AG04450 (cell line): ENCODE measurements at regions of chr6 and their contacts with region 1.

Region 1: DNA sequence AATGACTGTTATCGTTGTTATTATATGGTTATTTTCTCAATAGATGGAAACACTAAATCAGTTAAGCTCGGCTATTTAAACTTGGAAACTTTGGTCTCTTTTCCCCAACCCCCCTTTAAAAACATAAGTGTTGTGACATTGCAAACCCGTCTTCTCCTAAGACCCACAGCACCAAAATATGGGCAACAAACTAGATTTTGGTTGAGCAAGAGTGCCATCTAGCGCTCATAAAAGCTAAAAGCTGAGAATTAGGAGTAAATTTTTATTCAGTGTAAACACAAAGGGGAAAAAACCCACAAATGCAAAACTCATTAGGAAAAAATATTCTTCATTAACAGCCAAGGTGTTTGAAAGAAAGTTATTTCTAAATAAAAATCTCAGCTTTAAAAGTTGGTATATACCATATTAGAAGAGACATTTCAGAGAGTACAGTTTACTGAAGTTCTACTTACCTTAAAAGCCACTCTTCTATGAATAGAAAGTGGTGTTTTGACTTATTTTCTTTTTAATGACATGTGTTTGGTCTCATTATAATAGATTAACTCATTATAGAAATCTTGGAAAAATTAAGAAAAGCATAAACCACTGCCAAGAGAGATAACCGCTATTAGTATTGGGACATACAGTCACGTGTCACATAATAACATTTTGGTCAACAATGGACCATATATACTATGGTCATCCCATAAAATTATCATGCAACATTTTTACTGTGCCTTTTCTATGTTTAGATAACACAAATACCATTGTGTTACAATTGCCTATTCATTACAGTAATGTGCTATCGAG is 21.1 kb downstream of the SESN1 start:
- DNase-seq: peak; percentile 46
- H3K4me3 ChIP-seq: no peak overlapping the region
- H3K27ac ChIP-seq: no peak overlapping the region
- H3K27me3 ChIP-seq: no peaks in the 10 kb centered on the region
- CTCF ChIP-seq: peak; percentile 63

Region 2: DNA sequence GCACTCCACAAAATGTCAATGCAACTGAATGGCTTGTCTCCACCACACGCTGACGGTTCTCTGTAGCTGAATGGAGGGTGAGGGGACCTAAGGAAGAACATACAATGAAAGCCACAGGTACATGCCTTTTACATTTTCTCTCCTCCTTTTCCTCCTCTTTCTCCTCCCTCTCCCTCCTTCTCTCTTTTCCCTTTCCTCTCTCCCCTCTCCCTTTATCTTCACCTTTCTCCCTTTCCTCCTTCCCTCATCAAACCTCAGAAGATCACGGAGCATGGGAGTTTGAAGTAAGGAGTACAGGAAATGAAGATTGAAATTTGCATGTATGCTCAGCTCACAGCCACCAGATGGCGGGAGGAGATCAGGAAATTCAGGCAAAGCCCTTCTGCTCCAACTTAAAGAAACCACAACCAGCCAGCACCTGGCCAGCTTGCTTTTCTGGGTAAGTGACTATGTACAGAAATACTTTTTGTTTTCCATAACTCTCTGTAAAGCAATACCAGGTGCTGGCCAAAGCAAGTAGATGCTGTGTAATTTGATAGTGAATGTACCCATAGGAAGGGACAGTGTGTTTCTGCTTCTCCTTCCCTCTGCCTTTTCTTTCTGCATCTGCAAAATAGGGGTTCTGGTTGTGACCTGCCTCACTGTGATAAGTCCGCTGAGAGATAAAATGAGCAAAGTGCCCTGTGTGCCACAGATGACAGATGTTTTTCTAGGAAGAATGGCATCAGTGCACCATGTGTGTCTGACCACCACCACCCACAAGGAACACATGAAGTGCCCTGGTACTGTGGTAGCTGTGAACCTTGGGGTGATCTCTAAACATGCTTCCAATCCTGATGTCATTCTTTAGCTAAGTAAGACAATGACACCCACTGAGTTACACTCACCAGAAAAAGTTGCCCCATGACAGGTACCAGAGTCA is 531.4 kb before region 1 on chr6:
- CTCF ChIA-PET with region 1: interaction called, 121 read pairs
- POLR2A ChIA-PET with region 1: interaction called, 4 read pairs
- DNase-seq: peak; percentile 79
- H3K4me3 ChIP-seq: no peak overlapping the region
- H3K27ac ChIP-seq: no peak overlapping the region
- H3K27me3 ChIP-seq: peaks cover 2% of the 10 kb centered on the region
- CTCF ChIP-seq: peak; percentile 90

Region 3: DNA sequence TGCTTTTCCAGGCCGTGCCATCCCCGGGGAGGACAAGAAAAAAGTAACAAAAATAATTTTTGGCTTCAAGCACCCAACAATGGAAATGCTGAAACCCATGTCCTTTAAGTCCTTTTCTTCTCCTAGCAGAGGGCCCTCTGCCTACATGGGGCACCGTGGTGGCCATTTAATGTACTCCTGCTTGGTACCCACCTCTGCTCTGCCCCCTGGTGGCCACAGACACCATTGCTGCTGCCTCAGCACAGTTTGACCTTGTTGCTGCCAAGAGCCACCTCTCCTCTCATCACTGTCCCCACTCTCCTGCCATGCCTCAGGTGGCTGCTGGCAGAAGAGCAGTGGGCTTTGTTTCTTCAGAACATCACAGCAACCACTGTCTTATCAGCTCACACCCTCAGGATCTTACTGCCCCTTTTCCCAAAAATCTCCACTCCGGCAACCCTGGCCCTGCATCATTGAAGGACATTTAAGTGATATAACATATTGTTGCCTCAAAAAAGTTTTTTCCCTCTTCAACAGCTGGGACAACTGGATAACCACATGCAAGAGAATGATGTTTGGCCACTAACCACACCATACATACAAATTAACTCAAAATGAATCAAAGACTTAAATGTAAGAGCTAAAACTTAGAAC is 238.2 kb before region 1 on chr6:
- CTCF ChIA-PET with region 1: interaction called, 18 read pairs
- POLR2A ChIA-PET with region 1: no interaction called
- DNase-seq: peak; percentile 36
- H3K4me3 ChIP-seq: no peak overlapping the region
- H3K27ac ChIP-seq: no peak overlapping the region
- H3K27me3 ChIP-seq: no peaks in the 10 kb centered on the region
- CTCF ChIP-seq: peak; percentile 84

Region 4: DNA sequence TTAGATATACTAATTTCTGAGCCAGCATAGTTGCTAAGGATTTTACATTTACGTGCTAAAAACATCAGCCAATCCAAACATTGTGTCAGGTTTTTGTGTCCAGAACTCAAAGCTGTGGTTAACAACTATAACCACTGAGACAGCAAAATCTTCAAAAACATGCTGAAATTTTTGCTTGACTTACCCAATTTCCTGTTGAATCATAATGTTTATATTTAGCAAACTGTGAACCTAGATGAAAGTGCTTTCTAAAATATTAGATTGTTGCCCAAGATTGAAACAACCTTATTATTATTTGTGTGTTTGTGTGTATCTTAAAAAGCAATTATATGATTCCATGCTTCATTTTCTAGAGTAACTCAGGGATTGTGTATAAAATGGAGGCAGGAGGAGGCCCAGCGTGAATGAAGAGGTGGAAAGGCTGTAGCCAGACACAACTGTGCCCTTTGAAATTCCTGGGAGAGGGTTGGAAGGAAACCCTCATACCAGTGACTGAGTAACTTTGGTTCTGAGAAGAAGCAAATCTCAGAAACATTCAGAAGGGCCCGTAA is 177.4 kb before region 1 on chr6:
- CTCF ChIA-PET with region 1: interaction called, 13 read pairs
- POLR2A ChIA-PET with region 1: no interaction called
- DNase-seq: peak; percentile 55
- H3K4me3 ChIP-seq: no peak overlapping the region
- H3K27ac ChIP-seq: peak overlapping the region; percentile 89
- H3K27me3 ChIP-seq: no peaks in the 10 kb centered on the region
- CTCF ChIP-seq: no peak

Region 5: GRCh38 chr6:109062767-109063352 is 10.7 kb before region 1 on chr6:
- CTCF ChIA-PET with region 1: interaction called, 11 read pairs
- POLR2A ChIA-PET with region 1: no interaction called
- DNase-seq: no peak
- H3K4me3 ChIP-seq: no peak overlapping the region
- H3K27ac ChIP-seq: no peak overlapping the region
- H3K27me3 ChIP-seq: no peaks in the 10 kb centered on the region
- CTCF ChIP-seq: no peak

Region 6: GRCh38 chr6:109083657-109084056 is 10.1 kb after region 1 on chr6:
- CTCF ChIA-PET with region 1: interaction called, 15 read pairs
- POLR2A ChIA-PET with region 1: no interaction called
- DNase-seq: no peak
- H3K4me3 ChIP-seq: no peak overlapping the region
- H3K27ac ChIP-seq: no peak overlapping the region
- H3K27me3 ChIP-seq: no peaks in the 10 kb centered on the region
- CTCF ChIP-seq: no peak